ENCODE measurements at regions of chr5 and their contacts with region 1.

Region 1: DNA sequence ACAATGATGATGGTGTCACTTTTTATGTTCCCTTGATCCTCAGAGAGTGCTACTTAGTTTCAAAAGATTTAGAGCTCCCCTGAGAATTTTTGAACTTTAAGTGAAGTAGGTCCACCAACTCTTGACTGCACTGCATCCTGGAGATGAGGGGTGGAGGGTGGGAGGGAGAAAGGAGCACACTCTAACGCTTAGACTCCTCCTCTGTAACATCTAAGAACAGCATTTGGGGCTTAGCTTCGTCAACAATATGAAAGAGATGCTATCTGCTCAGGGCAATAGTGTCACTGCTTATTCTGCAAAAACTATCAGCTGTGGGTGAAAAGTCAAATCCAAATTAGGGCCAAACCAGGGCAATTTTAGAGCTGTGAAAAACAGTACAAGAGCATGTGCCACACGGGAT is 242.8 kb upstream of the EFNA5 start:
- DNase-seq: peak in 2 of 9 donors; percentile 0 to 10
- ATAC-seq: peak; percentile 34
- H3K4me3 ChIP-seq: no peak overlapping the region
- H3K4me3 Mint-ChIP-seq: peak overlapping the region in 2 of 10 donors; percentile 2 to 69
- H3K27ac ChIP-seq: no peak overlapping the region
- H3K27ac Mint-ChIP-seq: peak overlapping the region in 1 of 9 donors; percentile 46
- H3K4me1 ChIP-seq: peaks cover 0 to 5% of the 10 kb centered on the region in 2 donors
- H3K4me1 Mint-ChIP-seq: peaks cover 0 to 43% (median 15%) of the 10 kb centered on the region in 7 donors
- H3K27me3 ChIP-seq: no peaks in the 10 kb centered on the region
- H3K27me3 Mint-ChIP-seq: no peaks in the 10 kb centered on the region

Region 2: DNA sequence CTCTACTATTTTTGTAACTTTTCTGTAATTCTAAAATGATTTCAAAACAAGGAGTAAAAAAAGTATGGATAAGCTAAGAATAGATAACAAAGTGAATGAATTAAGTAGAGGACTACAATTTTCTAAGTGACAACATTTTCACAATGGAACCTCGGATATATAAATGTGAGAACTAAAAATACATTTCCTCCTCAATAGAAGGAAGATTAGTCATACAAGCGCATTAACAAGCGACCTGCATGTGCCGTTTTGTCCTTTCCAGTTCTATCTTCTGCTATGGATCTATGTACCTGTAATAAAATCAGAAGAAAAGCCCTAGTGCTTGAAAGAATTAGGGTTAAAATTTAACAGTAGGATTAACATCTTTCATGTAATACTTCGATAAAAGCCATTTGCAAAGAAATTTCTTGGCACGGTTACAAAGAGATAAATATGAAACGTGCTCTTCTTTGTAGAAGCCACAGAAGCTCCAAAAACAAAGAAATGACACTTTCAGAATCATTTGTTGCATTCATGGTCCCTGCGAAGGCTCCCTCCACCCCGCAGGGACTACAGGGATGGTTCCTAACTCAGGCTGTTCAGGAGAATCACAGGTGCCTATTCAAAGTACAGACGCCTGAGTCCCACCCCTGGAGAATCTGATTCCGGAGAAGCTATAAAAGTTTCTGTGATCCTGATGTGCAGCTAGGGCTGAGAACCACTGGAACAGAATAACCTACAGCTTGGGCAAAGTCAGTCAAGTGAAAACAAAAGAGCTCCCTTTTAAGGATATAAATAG is 26.1 kb before region 1 on chr5:
- CTCF ChIA-PET with region 1: no interaction called
- POLR2A ChIA-PET with region 1: no interaction called
- intact Hi-C with region 1: loop called in 1 of 2 experiments (anchors 2 kb)
- DNase-seq: peak in 2 of 9 donors; percentile 8 to 16
- ATAC-seq: no peak
- H3K4me3 ChIP-seq: no peak overlapping the region
- H3K4me3 Mint-ChIP-seq: peak overlapping the region in 7 of 10 donors; percentile 15 to 61 (median 55)
- H3K27ac ChIP-seq: no peak overlapping the region
- H3K27ac Mint-ChIP-seq: peak overlapping the region in 4 of 9 donors; percentile 18 to 68 (median 50)
- H3K4me1 ChIP-seq: no peaks in the 10 kb centered on the region
- H3K4me1 Mint-ChIP-seq: peaks cover 0 to 42% (median 23%) of the 10 kb centered on the region in 7 donors
- H3K27me3 ChIP-seq: no peaks in the 10 kb centered on the region
- H3K27me3 Mint-ChIP-seq: no peaks in the 10 kb centered on the region